Spleen (tissue), 13 donors: ENCODE measurements at regions of chr9 and their contacts with region 1.

Region 1: GRCh38 chr9:131237931-131238401 is 38.3 kb downstream of the FAM78A start:
- DNase-seq: peak; percentile 95
- H3K4me3 ChIP-seq: peak overlapping the region in 6 of 8 donors; percentile 5 to 47 (median 11)
- H3K27ac ChIP-seq: peak overlapping the region; percentile 73 to 88 (median 83)
- H3K4me1 ChIP-seq: peaks cover 7 to 70% (median 39%) of the 10 kb centered on the region in 6 donors
- H3K27me3 ChIP-seq: no peaks in the 10 kb centered on the region
- CTCF ChIP-seq: no peak
- POLR2A ChIP-seq: no peak

Region 2: GRCh38 chr9:131289301-131290038 is 51.5 kb after region 1 on chr9 and contains the start of gene PLPP7:
- intact Hi-C with region 1: loop called (anchors 10 kb)
- DNase-seq: no peak
- H3K4me3 ChIP-seq: peak within 1 kb of the TSS; percentile 6 to 62 (median 26)
- H3K27ac ChIP-seq: peak within 1 kb of the TSS in 5 of 8 donors; percentile 42 to 63 (median 60)
- H3K4me1 ChIP-seq: peaks cover 0 to 19% (median 6%) of the 10 kb centered on the region in 6 donors
- H3K27me3 ChIP-seq: no peaks in the 10 kb centered on the region
- CTCF ChIP-seq: no peak
- POLR2A ChIP-seq: no peak
- total RNA-seq, gene PLPP7: 2.3 to 3.8 (median 3.1) TPM

Region 3: GRCh38 chr9:131304687-131305394 is 66.9 kb after region 1 on chr9:
- intact Hi-C with region 1: no loop called
- DNase-seq: no peak
- H3K4me3 ChIP-seq: no peak overlapping the region
- H3K27ac ChIP-seq: no peak overlapping the region
- H3K4me1 ChIP-seq: peaks cover 0 to 4% (median 0%) of the 10 kb centered on the region in 6 donors
- H3K27me3 ChIP-seq: no peaks in the 10 kb centered on the region
- CTCF ChIP-seq: no peak
- POLR2A ChIP-seq: no peak

Region 4: GRCh38 chr9:131464354-131465000 is 226.5 kb after region 1 on chr9:
- intact Hi-C with region 1: no loop called
- DNase-seq: peak; percentile 56
- H3K4me3 ChIP-seq: no peak overlapping the region
- H3K27ac ChIP-seq: no peak overlapping the region
- H3K4me1 ChIP-seq: peaks cover 0 to 23% (median 11%) of the 10 kb centered on the region in 6 donors
- H3K27me3 ChIP-seq: no peaks in the 10 kb centered on the region
- CTCF ChIP-seq: no peak
- POLR2A ChIP-seq: no peak